Naive thymus-derived CD8-positive, alpha-beta T cell (primary cell): ENCODE measurements at regions of chr13 and their contacts with region 1.

Region 1: GRCh38 chr13:100588331-100589177 is at the start of gene GGACT:
- DNase-seq: peak; percentile 68 to 89 (median 85)
- ATAC-seq: peak; percentile 89 to 91
- H3K4me3 Mint-ChIP-seq: peak within 1 kb of the TSS; percentile 76 to 90 (median 84)
- H3K27ac Mint-ChIP-seq: peak within 1 kb of the TSS; percentile 86 to 95 (median 92)
- H3K4me1 Mint-ChIP-seq: peaks cover 24 to 51% (median 49%) of the 10 kb centered on the region in 4 donors
- H3K27me3 Mint-ChIP-seq: no peaks in the 10 kb centered on the region
- polyA plus RNA-seq, gene GGACT: 5.3 to 10.4 (median 7.7) TPM

Region 2: GRCh38 chr13:100674848-100675660 is 86.5 kb after region 1 on chr13:
- POLR2A ChIA-PET with region 1: interaction called, 20 read pairs
- DNase-seq: peak; percentile 99 to 100 (median 99)
- ATAC-seq: peak; percentile 90 to 94
- H3K4me3 Mint-ChIP-seq: peak overlapping the region; percentile 87 to 96 (median 93)
- H3K27ac Mint-ChIP-seq: peak overlapping the region; percentile 12 to 95 (median 90)
- H3K4me1 Mint-ChIP-seq: peaks cover 19 to 41% (median 26%) of the 10 kb centered on the region in 4 donors
- H3K27me3 Mint-ChIP-seq: peaks cover 0 to 2% (median 0%) of the 10 kb centered on the region in 5 donors